ENCODE measurements at regions of chr13 and their contacts with region 1.

Region 1: DNA sequence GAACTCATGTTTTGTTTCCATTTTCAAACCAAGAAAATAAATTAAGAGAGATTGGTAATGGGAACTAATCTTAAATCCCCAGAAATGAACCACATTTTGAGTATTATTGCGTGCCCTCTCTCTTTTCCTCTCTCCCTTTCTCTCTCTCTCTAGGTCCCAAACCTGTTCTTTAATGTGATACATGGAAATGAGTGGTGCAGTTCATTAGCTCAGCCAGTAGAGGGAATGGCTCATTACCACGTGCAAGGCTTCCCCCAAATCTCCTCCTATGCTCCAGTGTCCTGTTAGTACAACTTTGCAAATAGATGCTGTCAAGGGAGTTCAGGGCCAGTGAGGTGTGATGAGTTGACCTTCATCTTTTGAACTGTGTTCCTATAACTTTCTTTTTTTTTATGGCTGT is 178.4 kb downstream of the FGF9 start:
- DNase-seq: peak; percentile 40
- ATAC-seq: peak; percentile 90
- H3K4me3 ChIP-seq: no peak overlapping the region
- H3K27ac ChIP-seq: no peak overlapping the region
- H3K4me1 ChIP-seq: no peaks in the 10 kb centered on the region
- H3K27me3 ChIP-seq: no peaks in the 10 kb centered on the region
- CTCF ChIP-seq: peak in 2 of 3 experiments; percentile 56 to 69; a peak in 4 of 6 replicates
- POLR2A ChIP-seq: no peak
- RAD21 ChIP-seq: peak; percentile 18; the same call in 1 of the 2 replicates

Region 2: GRCh38 chr13:22740264-22740663 is 890.9 kb after region 1 on chr13:
- CTCF ChIA-PET with region 1: no interaction called
- POLR2A ChIA-PET with region 1: no interaction called
- RAD21 ChIA-PET with region 1: no interaction called
- intact Hi-C with region 1: loop called (anchors 10 kb)
- DNase-seq: no peak
- ATAC-seq: no peak
- H3K4me3 ChIP-seq: no peak overlapping the region
- H3K27ac ChIP-seq: no peak overlapping the region
- H3K4me1 ChIP-seq: peaks cover 0 to 8% of the 10 kb centered on the region in 2 experiments; a peak in 3 of 4 replicates
- H3K27me3 ChIP-seq: no peaks in the 10 kb centered on the region
- CTCF ChIP-seq: peak; percentile 16 to 71 (median 64); a peak in 5 of 6 replicates
- POLR2A ChIP-seq: no peak
- RAD21 ChIP-seq: peak; percentile 46